ENCODE measurements at regions of chr10 and their contacts with region 1.

Region 1: DNA sequence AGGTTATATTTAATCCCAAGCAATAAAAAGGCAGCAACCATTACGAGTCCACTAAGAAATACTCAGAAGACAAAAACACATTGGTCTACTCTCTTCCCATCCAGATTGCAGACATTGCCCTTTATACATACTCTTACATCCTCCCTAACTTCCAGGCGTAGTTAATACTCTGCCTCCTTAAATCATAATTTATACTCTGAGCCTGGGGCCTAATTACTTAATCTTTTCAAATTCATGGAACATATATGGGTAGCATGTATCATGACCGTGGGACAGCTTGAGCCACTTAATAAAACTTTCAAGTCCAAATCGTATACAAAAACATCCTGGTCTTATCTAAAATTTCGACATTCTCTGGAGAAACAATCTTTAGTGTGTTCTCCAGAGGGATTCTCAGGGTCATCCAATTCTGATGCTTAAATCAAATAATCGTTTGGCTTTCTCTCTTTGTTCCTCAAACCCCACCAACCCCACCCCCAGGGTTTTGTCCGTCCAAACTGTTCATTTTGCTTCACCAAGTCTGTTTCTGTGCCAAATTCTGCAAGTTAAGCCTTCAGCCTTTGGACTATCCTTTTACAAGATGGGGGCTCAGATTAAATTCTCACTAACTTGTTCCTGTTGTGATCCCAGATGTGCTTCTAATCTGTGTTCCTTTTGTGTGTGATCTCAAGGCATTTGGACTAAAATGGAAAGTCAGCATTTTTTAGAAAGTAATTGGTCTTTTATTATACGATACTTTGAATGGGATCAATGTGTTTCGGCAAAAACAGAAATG is 86.4 kb downstream of the ADAM12 start:
- DNase-seq: no peak
- H3K4me3 ChIP-seq: no peak overlapping the region
- H3K27me3 ChIP-seq: no peaks in the 10 kb centered on the region
- CTCF ChIP-seq: no peak

Region 2: GRCh38 chr10:126264102-126265018 is 37.5 kb before region 1 on chr10:
- CTCF ChIA-PET with region 1: no interaction called
- POLR2A ChIA-PET with region 1: interaction called, 14 read pairs
- DNase-seq: no peak
- H3K4me3 ChIP-seq: no peak overlapping the region
- H3K27me3 ChIP-seq: no peaks in the 10 kb centered on the region
- CTCF ChIP-seq: no peak

Region 3: DNA sequence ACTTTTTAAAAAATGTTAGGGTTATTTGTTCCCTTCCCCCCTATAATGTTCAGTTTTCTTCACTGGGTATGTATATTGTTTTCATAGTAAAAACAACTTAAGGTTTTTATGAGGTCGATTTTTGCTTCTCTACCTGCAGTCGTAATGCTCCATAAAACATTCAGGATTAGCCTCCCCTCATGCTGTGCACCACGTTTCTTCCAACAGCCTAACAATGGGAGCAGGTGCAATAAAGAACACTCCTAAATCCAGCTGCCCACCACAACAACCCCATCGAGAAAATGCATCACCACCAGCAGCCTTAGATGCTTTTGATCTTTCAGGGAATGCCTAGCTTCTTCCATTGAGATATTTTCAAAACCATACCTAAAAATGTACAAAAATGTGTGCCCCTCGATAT is 24.7 kb before region 1 on chr10:
- CTCF ChIA-PET with region 1: no interaction called
- POLR2A ChIA-PET with region 1: no interaction called
- DNase-seq: no peak
- H3K4me3 ChIP-seq: no peak overlapping the region
- H3K27me3 ChIP-seq: no peaks in the 10 kb centered on the region
- CTCF ChIP-seq: no peak